ENCODE measurements at regions of chr6 and their contacts with region 1.

Region 1: GRCh38 chr6:33579828-33580714 is at the start of gene BAK1:
- DNase-seq: peak; percentile 94 to 97 (median 96)
- H3K4me3 ChIP-seq: peak within 1 kb of the TSS; percentile 72 to 91 (median 88)
- H3K27ac ChIP-seq: peak within 1 kb of the TSS; percentile 78 to 80
- H3K4me1 ChIP-seq: peaks cover 0 to 13% (median 6%) of the 10 kb centered on the region in 3 donors
- H3K27me3 ChIP-seq: no peaks in the 10 kb centered on the region
- CTCF ChIP-seq: peak; percentile 46
- total RNA-seq, gene BAK1: 22.3 TPM

Region 2: GRCh38 chr6:33696548-33697518 is 116.8 kb after region 1 on chr6:
- intact Hi-C with region 1: loop called (anchors 10 kb)
- DNase-seq: peak in 2 of 5 donors; percentile 66 to 84
- H3K4me3 ChIP-seq: no peak overlapping the region
- H3K27ac ChIP-seq: peak overlapping the region in 1 of 2 donors; percentile 1
- H3K4me1 ChIP-seq: peaks cover 0 to 13% (median 6%) of the 10 kb centered on the region in 3 donors
- H3K27me3 ChIP-seq: no peaks in the 10 kb centered on the region
- CTCF ChIP-seq: no peak

Measured in kidney (tissue), 22 donors.